GM13976 (cell line): ENCODE measurements at regions of chr4 and their contacts with region 1.

Region 1: DNA sequence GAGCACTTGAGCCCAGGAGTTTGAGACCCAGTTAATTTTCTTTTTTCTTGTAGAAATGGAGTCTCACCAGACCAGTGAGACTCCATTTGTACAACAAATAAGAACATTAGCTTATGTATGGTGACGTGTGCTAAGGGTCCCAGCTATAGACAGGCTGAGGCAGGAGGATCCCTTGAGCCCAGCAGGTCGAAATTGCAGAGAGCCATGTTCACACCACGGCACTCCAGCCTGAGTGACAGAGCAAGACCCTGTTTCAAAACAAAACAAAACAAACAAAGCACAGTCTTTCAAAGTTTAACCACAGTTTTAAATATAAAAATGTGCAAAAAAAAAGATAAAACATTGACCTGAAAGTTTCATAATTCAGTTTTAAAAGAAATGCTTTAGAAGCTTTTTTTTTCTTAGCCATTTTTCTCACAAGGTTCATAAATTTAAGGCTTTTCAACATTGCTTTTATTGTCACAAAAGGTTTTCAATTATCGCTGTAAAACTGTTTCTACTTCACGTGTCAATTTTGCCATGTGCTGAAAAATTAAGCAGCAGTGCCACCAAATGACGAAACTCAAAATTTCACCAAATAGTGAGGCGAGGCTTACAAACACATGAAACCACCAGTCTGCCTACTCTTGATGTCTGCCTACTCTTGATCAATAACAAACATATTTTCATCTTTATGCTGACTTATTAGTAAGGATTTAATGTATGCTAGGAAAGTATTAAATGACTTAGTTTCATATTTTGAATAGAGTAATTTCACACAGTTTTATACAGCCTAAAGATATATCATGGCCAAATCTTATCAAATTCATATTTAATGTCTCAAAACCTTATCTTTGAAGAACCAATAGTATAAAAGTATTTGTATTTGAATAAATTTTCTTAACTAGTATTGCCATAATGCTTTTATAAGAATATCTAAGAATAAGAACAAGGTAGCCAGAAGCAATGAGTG is 126.3 kb downstream of the NEK1 start:
- DNase-seq: peak; percentile 52
- CTCF ChIP-seq: peak; percentile 52

Region 2: DNA sequence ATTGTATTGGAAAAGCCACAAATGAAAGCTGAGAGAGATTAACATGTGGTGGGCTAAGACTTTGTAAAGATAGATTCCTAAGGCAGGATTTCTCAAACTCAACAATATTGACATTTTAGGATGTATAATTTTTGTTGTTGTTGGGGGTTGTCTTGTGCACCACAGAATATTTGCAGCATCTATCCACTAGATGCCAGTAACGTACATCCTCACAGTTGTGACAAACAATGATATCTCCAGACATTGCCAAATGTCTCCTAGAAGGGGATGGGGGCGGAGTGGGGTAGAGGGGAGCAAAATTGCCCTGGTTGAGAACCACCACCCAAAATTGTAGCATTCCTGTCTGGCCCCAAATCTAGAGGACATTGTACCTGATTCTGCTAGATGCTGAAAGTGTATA is 461.3 kb before region 1 on chr4:
- in situ Hi-C with region 1: loop called (anchors 10 kb)
- DNase-seq: peak; percentile 65
- CTCF ChIP-seq: peak; percentile 57